Panc1 (cell line): ENCODE measurements at regions of chr19 and their contacts with region 1.

Region 1: GRCh38 chr19:10717356-10718204 is at the start of gene DNM2:
- DNase-seq: peak; percentile 99
- ATAC-seq: peak; percentile 94
- H3K4me3 ChIP-seq: peak within 1 kb of the TSS; percentile 76 to 78
- H3K27ac ChIP-seq: peak within 1 kb of the TSS; percentile 80
- H3K4me1 ChIP-seq: peaks cover 3% of the 10 kb centered on the region; the same call in 1 of the 2 replicates
- H3K27me3 ChIP-seq: no peaks in the 10 kb centered on the region
- CTCF ChIP-seq: peak; percentile 82; the same call in 1 of the 2 replicates
- total RNA-seq, gene DNM2: 125 TPM

Region 2: GRCh38 chr19:10864538-10864899 is 146.9 kb after region 1 on chr19:
- CTCF ChIA-PET with region 1: interaction called, 9 read pairs
- POLR2A ChIA-PET with region 1: no interaction called
- in situ Hi-C with region 1: no loop called
- intact Hi-C with region 1: loop called (anchors 10 kb)
- DNase-seq: peak; percentile 62
- ATAC-seq: peak; percentile 95
- H3K4me3 ChIP-seq: no peak overlapping the region
- H3K27ac ChIP-seq: no peak overlapping the region
- H3K4me1 ChIP-seq: peaks cover 3% of the 10 kb centered on the region; the same call in 1 of the 2 replicates
- H3K27me3 ChIP-seq: no peaks in the 10 kb centered on the region
- CTCF ChIP-seq: peak; percentile 91